ENCODE measurements at regions of chr6 and their contacts with region 1.

Region 1: GRCh38 chr6:111418971-111419693 is 63.9 kb downstream of the REV3L start:
- DNase-seq: no peak
- ATAC-seq: no peak
- H3K4me3 Mint-ChIP-seq: no peak overlapping the region
- H3K27ac Mint-ChIP-seq: no peak overlapping the region
- H3K4me1 Mint-ChIP-seq: peaks cover 15% of the 10 kb centered on the region
- H3K27me3 Mint-ChIP-seq: no peaks in the 10 kb centered on the region
- CTCF ChIP-seq: no peak

Region 2: DNA sequence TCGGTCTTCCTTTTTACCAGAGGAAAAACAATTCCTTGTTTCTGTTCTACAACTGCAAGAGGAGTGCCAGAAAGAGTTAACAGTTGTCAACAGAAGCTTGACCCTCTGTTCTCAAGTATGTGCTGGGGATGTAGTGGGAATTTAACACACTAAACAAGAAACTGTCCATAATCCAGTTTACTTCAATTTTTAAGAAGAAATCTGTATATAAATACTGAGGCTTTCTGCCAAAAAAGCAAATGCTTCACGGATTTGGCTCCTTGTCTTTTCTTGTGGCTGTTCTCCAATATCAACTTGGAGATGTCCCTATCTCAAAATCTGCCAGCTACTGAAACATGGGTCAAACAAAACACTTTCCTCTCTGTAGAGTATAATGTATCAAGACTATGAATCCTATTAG is 37.1 kb after region 1 on chr6:
- CTCF ChIA-PET with region 1: no interaction called
- POLR2A ChIA-PET with region 1: no interaction called
- intact Hi-C with region 1: loop called (anchors 1 kb)
- DNase-seq: no peak
- ATAC-seq: no peak
- H3K4me3 Mint-ChIP-seq: no peak overlapping the region
- H3K27ac Mint-ChIP-seq: no peak overlapping the region
- H3K4me1 Mint-ChIP-seq: peaks cover 2% of the 10 kb centered on the region
- H3K27me3 Mint-ChIP-seq: no peaks in the 10 kb centered on the region
- CTCF ChIP-seq: no peak

Measured in activated B cell treated with CpG ODN at 0.5 μM for 24 hours (primary cell).